ENCODE measurements at regions of chr1 and their contacts with region 1.

Region 1: DNA sequence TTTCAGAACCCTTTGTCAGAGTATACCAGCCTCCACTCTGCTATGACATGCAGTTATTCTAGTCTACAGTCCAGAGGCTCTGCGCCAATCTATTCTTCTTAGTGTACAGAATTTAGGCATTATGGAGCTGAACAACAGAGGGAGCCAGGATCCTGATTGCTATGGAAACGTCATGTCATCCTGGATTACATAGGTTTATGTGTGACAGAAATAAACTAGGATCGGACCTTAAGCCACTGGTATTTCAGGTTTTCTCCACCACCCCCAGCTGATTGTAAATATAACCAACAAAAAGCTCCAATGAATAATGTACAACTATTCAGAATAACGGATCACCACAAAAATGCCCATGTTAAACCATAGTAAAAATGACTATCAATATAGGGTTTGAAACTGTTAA is 48.1 kb upstream of the EEIG2 start:
- DNase-seq: no peak
- ATAC-seq: no peak
- H3K4me3 ChIP-seq: no peak overlapping the region
- H3K27ac ChIP-seq: no peak overlapping the region
- H3K4me1 ChIP-seq: no peaks in the 10 kb centered on the region
- H3K27me3 ChIP-seq: no peaks in the 10 kb centered on the region
- CTCF ChIP-seq: no peak

Region 2: DNA sequence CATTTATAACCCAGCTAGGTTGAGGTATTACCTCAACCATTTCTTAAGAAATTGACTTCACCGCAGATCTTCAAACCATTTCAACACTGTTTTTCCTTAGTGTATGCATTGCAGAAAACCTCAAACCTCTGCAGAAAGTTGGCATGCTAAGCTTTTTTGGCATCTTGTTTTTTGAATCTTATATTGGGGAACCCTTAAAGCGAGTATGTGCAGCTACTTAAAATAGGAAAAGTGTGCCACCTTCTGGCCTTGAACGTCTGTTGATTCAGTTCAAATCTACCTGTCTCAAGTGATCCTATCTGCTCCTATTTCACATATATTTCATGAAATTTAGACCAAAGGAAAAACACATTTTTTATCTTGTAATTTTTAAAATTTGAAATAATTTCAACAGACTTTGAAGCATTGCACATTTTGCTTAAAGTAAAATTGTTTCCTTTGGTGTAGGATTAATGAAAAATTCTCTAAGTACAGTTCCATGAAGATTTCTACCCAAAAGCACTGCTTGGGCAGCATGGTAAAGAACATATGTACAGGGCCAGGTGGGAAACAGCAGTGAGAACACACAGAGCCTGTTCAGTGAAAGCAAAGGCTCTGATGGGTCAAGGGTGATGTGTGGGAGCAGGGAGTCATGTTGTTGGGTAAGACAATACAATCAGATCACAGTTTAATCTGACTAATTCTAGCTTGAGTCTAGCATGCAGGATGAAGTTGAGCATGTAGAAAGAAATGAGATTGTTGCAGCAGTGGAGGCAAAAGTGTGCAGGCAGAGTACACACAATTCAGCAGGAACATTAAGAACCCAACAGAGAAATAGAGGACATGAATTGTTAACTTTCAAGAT is 131.9 kb after region 1 on chr1:
- CTCF ChIA-PET with region 1: interaction called, 5 read pairs
- POLR2A ChIA-PET with region 1: no interaction called
- in situ Hi-C with region 1: no loop called
- intact Hi-C with region 1: loop called (anchors 1 kb)
- DNase-seq: no peak
- ATAC-seq: peak; percentile 91
- H3K4me3 ChIP-seq: no peak overlapping the region
- H3K27ac ChIP-seq: no peak overlapping the region
- H3K4me1 ChIP-seq: no peaks in the 10 kb centered on the region
- H3K27me3 ChIP-seq: no peaks in the 10 kb centered on the region
- CTCF ChIP-seq: peak; percentile 54; the same call in 1 of the 2 replicates

Region 3: DNA sequence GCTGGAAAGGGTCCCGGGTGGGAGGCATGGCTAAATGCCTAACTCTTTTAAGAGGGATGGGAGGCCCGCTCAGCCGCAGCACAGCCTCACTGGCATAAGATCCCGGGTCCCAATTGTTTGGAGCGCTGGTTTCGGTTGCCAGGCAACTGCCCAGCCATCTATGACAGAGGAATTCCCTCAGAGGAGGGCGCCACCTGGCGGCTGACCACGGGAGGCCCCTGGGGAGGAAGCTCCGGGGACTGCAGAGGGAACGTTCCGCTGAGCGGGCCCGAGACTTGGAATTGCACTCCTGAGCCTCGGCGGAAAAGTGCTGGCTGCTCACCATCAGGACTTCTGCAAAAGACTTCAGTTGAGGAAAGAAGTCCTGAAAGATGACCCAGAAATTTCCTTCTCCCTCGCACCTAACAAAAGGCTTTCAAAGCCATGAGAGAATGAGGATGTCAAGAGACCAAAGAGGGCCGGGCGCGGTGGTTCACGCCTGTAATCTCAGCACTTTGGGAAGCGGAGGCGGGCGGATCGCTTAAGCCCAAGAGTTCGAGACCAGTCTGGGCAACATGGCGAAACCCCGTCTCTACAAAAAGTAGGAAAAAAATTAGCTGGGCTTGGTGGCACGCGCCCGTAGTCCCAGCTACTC is 600.9 kb after region 1 on chr1:
- CTCF ChIA-PET with region 1: no interaction called
- POLR2A ChIA-PET with region 1: no interaction called
- in situ Hi-C with region 1: no loop called
- intact Hi-C with region 1: no loop called
- DNase-seq: no peak
- ATAC-seq: peak; percentile 94
- H3K4me3 ChIP-seq: peak overlapping the region; percentile 3 to 30; a peak in 3 of 4 replicates
- H3K27ac ChIP-seq: no peak overlapping the region
- H3K4me1 ChIP-seq: no peaks in the 10 kb centered on the region
- H3K27me3 ChIP-seq: no peaks in the 10 kb centered on the region
- CTCF ChIP-seq: peak; percentile 91

Measured in Panc1 (cell line).